Adrenal gland (tissue), 19 donors: ENCODE measurements at regions of chr7 and their contacts with region 1.

Region 1: DNA sequence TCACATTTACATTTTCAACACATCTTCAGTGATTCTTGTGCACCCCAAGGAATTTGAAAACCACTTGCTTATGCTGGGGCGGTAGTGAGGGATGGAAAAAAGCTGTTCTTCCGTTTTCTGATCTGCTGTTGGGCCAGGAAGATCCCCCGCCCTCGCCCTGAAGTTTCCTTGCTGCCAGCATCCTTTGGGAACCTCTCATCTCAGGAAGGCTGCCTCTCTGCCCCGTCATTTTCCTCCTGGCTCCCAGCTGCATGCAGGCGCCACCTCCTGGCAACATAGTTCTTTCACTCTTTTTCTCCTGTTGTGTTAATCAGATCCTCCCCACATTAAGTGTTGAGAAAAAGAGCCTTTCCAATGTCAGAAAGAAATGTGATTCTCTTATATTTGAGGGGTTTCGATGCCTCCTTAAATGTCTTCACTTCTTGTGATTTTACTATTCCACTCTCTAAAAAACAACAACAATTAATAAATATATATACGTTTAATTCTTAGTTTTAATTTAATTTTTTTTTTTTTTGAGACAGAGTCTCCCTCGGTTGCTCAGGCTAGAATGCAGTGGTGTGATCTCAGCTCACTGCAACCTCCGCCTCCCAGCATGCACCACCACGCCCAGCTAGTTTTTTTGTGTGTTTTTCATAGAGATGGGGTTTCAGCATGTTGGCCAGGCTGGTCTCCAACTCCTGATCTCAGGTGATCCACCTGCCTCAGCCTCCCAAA is 122.9 kb downstream of the RALA start:
- DNase-seq: peak; percentile 76 to 92 (median 84)
- H3K4me3 ChIP-seq: no peak overlapping the region
- H3K27ac ChIP-seq: no peak overlapping the region
- H3K4me1 ChIP-seq: no peaks in the 10 kb centered on the region
- H3K27me3 ChIP-seq: no peaks in the 10 kb centered on the region
- CTCF ChIP-seq: peak; percentile 67 to 91 (median 84)
- POLR2A ChIP-seq: no peak

Region 2: GRCh38 chr7:39580149-39580874 is 165.9 kb before region 1 on chr7:
- intact Hi-C with region 1: loop called (anchors 2 kb)
- DNase-seq: peak; percentile 79 to 94 (median 88)
- H3K4me3 ChIP-seq: no peak overlapping the region
- H3K27ac ChIP-seq: no peak overlapping the region
- H3K4me1 ChIP-seq: no peaks in the 10 kb centered on the region
- H3K27me3 ChIP-seq: no peaks in the 10 kb centered on the region
- CTCF ChIP-seq: peak; percentile 74 to 96 (median 90)
- POLR2A ChIP-seq: no peak

Region 3: DNA sequence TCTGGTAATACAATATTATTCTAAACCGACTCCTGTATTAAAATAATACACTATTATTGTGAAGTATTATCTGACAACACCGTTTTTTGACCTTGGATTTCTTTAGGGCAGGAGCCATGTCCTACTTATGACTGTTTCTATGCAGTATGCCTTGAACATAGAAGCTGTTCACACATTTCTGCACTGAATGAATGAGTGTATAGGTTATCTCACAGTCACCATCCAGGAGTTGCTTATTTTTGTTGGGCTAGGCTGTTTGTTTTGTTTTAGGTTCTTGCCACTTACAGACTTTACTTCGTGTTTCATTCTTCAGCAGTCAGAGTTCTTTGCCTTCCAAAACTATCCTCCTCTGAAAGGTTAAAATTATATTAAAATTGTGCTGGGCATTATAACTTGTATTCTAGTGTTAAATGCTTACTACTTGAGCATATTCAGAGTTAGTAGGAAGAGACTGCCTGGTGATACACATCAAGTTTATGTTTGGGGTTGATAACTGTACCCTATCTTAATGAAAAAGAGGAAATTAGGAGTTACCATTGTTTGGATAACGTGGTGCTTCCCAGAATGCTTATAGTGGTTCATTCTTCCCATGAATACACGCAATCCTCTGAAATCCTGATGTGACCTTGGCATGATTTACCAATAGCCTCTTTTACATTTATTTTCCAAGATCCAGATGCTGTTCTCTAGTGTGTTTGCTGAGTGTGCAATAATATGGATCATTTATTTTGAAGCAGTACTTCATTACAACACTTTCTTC is 121.1 kb before region 1 on chr7:
- intact Hi-C with region 1: loop called (anchors 5 to 10 kb)
- DNase-seq: no peak
- H3K4me3 ChIP-seq: peak overlapping the region in 2 of 4 donors; percentile 88 to 96
- H3K27ac ChIP-seq: peak overlapping the region in 3 of 5 donors; percentile 64 to 91 (median 86)
- H3K4me1 ChIP-seq: peaks cover 33 to 53% of the 10 kb centered on the region in 2 donors
- H3K27me3 ChIP-seq: no peaks in the 10 kb centered on the region
- CTCF ChIP-seq: no peak
- POLR2A ChIP-seq: peak in 1 of 2 donors; percentile 19

Region 4: GRCh38 chr7:39633563-39634477 is 112.4 kb before region 1 on chr7:
- intact Hi-C with region 1: loop called (anchors 5 to 10 kb)
- DNase-seq: no peak
- H3K4me3 ChIP-seq: no peak overlapping the region
- H3K27ac ChIP-seq: no peak overlapping the region
- H3K4me1 ChIP-seq: peaks cover 17 to 32% of the 10 kb centered on the region in 2 donors
- H3K27me3 ChIP-seq: no peaks in the 10 kb centered on the region
- CTCF ChIP-seq: no peak
- POLR2A ChIP-seq: no peak